HCT116 (cell line): ENCODE measurements at regions of chr16 and their contacts with region 1.

Region 1: DNA sequence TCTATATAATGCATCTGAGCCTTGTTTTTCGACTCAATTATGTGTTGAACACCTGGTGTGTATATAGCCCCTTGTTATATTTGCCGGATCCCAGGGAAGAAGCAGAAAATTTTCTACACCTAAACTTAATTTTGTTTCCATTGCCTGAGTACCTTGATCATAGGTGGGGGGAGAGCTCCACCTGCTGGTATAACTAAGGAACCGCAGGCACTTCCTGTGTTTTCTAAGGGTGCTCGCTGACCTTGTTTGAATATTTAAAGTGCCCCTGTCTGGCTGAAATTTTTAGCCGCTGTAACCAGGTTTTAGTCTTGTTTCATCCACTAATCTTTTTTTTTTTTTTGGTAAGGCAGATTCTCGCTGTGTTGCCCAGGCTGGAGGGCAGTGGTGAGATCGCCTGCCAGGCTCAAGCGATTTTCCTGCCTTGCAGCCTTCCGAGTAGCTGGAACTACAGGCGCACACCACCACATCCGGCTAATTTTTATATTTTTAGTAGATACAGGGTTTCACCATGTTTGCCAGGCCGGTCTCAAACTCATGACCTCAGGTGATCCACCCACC is 6.5 kb upstream of the NUBP1 start:
- DNase-seq: peak; percentile 50
- ATAC-seq: peak; percentile 54; the same call in 1 of the 2 replicates
- H3K4me3 ChIP-seq: no peak overlapping the region
- H3K27ac ChIP-seq: peak overlapping the region; percentile 34; the same call in 1 of the 2 replicates
- H3K4me1 ChIP-seq: peaks cover 22 to 36% of the 10 kb centered on the region in 2 experiments
- H3K27me3 ChIP-seq: no peaks in the 10 kb centered on the region
- CTCF ChIP-seq: peak; percentile 86 to 95 (median 94)
- POLR2A ChIP-seq: no peak
- RAD21 ChIP-seq: peak; percentile 95

Region 2: DNA sequence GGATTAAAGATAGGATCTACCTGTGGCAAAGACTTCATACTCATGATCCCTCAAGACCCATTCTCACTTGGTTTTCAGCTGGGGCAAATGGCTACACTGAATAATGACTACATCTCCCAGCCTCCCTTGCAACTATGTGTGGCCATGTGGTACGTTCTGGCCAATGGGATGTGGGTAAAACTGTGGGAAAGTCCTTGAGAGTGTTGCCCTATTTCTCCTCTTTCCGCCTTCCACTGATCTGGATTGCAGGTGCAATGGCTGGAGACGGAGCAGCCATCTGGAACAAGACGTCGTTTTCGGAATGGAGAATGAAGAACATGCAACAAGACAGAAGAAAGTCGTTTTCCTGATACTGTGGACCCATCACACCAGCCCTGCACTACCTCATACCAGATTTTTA is 1597.2 kb before region 1 on chr16:
- CTCF ChIA-PET with region 1: no interaction called
- POLR2A ChIA-PET with region 1: no interaction called
- RAD21 ChIA-PET with region 1: no interaction called
- intact Hi-C with region 1: loop called (anchors 10 kb)
- DNase-seq: peak; percentile 59
- ATAC-seq: peak; percentile 82
- H3K4me3 ChIP-seq: no peak overlapping the region
- H3K27ac ChIP-seq: no peak overlapping the region
- H3K4me1 ChIP-seq: peaks cover 0 to 13% of the 10 kb centered on the region in 2 experiments; a peak in 2 of 4 replicates
- H3K27me3 ChIP-seq: peaks cover 9% of the 10 kb centered on the region; the same call in 1 of the 2 replicates
- CTCF ChIP-seq: no peak
- POLR2A ChIP-seq: no peak
- RAD21 ChIP-seq: no peak

Region 3: GRCh38 chr16:10314811-10315210 is 422.3 kb before region 1 on chr16:
- CTCF ChIA-PET with region 1: no interaction called
- POLR2A ChIA-PET with region 1: no interaction called
- RAD21 ChIA-PET with region 1: no interaction called
- intact Hi-C with region 1: loop called (anchors 5 kb)
- DNase-seq: no peak
- ATAC-seq: peak; percentile 54; the same call in 1 of the 2 replicates
- H3K4me3 ChIP-seq: no peak overlapping the region
- H3K27ac ChIP-seq: no peak overlapping the region
- H3K4me1 ChIP-seq: peaks cover 0 to 5% of the 10 kb centered on the region in 2 experiments; a peak in 1 of 4 replicates
- H3K27me3 ChIP-seq: no peaks in the 10 kb centered on the region
- CTCF ChIP-seq: peak in 2 of 3 experiments; percentile 11 to 54; a peak in 1 of 6 replicates
- POLR2A ChIP-seq: no peak
- RAD21 ChIP-seq: peak; percentile 70

Region 4: DNA sequence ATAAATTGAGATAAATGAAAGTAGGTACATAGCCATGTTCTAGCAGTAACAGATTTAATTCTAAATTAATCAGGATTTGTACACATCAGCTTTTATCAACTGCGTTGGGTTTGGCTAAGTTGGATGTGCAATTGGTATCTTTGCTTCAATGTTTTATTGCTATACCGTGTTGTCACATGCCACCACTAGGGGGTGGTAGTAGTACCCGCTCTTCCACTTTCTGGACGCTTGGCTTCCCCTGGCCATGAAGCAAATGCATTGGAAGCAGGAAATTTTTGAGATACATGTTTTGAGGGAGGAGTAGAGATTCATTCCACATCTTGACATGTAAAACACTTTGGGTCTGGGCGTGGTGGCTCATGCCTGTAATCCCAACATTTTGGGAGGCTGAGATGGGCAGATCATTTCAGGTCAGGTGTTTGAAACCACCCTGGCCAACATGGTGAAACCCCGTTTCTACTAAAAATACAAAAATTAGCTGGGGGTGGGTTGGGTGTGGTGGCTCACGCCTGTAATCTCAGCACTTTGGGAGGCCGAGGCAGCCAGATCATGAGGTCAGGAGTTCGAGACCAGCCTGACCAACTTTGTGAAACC is 215.4 kb before region 1 on chr16:
- CTCF ChIA-PET with region 1: interaction called, 17 read pairs
- POLR2A ChIA-PET with region 1: interaction called, 3 read pairs
- RAD21 ChIA-PET with region 1: no interaction called
- intact Hi-C with region 1: loop called (anchors 1 kb)
- DNase-seq: peak; percentile 42
- ATAC-seq: peak; percentile 85
- H3K4me3 ChIP-seq: no peak overlapping the region
- H3K27ac ChIP-seq: no peak overlapping the region
- H3K4me1 ChIP-seq: no peaks in the 10 kb centered on the region
- H3K27me3 ChIP-seq: no peaks in the 10 kb centered on the region
- CTCF ChIP-seq: peak; percentile 77 to 90 (median 89)
- POLR2A ChIP-seq: no peak
- RAD21 ChIP-seq: peak; percentile 87

Region 5: GRCh38 chr16:10668322-10669045 is 68.7 kb before region 1 on chr16:
- CTCF ChIA-PET with region 1: no interaction called
- POLR2A ChIA-PET with region 1: no interaction called
- RAD21 ChIA-PET with region 1: no interaction called
- intact Hi-C with region 1: loop called (anchors 2 kb)
- DNase-seq: no peak
- ATAC-seq: peak; percentile 98
- H3K4me3 ChIP-seq: no peak overlapping the region
- H3K27ac ChIP-seq: no peak overlapping the region
- H3K4me1 ChIP-seq: no peaks in the 10 kb centered on the region
- H3K27me3 ChIP-seq: no peaks in the 10 kb centered on the region
- CTCF ChIP-seq: peak; percentile 30 to 81 (median 63); a peak in 5 of 6 replicates
- POLR2A ChIP-seq: no peak
- RAD21 ChIP-seq: peak; percentile 48